Sciatic nerve (tissue), 2 donors: ENCODE measurements at regions of chrX and their contacts with region 1.

Region 1: DNA sequence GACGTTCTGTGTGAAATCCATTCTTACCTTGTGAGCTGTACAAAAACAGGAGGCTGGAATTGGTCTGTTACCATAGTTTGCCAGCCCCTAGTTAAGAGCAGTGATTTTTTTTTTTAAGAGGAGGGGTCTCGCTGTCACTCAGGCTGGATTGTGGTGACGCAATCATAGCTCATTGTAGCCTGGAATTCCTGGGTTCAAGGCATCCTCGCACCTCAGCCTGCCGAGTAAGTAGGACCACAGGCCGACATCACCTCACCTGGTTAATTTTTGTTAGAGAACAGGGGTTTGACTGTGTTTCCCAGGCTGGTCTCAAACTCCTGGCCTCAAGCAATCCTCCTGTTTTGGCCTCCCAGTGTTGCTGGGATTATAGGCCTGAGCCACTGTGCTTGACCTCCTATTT is 7.5 kb downstream of the USP9X start:
- DNase-seq: no peak
- ATAC-seq: no peak

Region 2: DNA sequence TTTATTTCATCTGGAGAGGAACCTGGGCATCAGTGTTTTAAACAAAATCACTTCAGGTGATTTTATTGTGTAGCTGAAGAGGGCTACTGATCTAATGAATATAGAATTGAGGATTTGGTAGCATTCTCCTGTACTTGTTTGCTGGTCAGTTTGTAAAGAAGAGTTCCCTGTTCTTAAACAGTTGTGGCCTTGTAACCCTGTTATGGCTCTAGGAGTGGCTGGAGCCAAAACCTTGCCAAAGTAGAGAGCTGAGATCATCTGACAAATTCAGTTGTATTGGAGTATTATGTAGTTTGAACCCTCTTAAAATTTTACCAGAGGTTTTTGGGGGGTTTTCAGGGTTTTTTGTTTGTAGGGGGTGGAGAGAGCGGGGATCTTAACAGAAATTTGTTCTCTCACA is 29.0 kb after region 1 on chrX:
- intact Hi-C with region 1: loop called (anchors 1 kb)
- DNase-seq: no peak
- ATAC-seq: no peak